Gastrocnemius medialis (tissue), 4 donors: ENCODE measurements at regions of chr19 and their contacts with region 1.

Region 1: DNA sequence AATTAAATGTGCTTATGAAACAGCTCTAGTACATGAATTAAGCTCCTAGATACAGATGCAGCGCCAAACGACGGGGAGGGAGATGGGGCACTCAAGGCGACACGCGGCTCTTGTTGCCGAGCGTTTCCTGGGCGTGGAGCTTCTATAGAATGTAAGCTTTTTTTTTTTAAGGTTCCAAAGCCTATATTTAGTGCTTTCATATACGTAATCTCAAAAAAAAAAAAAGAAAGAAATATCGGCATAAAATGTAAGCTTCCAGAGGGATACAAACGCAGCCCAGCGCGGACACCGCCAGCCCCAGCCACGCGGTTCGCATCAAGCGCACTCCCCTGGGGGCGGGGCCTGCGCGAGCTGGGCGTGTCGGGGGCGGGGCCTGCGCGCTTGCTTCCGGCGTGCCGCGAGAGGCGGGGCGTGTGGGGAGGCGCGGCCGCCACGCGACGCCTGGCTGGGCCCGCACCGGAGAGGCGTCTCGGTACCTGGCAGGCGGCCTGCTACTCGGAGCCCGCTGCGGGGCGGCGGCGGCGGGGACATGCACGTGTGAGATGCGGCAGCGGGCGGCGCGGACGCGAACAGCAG is at the start of gene URI1:
- DNase-seq: peak; percentile 80 to 87
- ATAC-seq: peak; percentile 93 to 94
- H3K4me3 ChIP-seq: peak within 1 kb of the TSS; percentile 65 to 88 (median 78)
- H3K27ac ChIP-seq: peak within 1 kb of the TSS; percentile 70 to 87 (median 80)
- H3K4me1 ChIP-seq: peaks cover 24 to 25% of the 10 kb centered on the region in 2 donors
- H3K27me3 ChIP-seq: no peaks in the 10 kb centered on the region
- CTCF ChIP-seq: no peak
- POLR2A ChIP-seq: peak; percentile 74 to 84
- total RNA-seq, gene URI1: 37.4 to 84.1 (median 59.2) TPM

Region 2: GRCh38 chr19:29844891-29845572 is 96.9 kb before region 1 on chr19:
- in situ Hi-C with region 1: no loop called
- intact Hi-C with region 1: loop called (anchors 1 kb)
- DNase-seq: peak; percentile 86 to 90
- ATAC-seq: peak; percentile 86 to 89
- H3K4me3 ChIP-seq: peak overlapping the region; percentile 67 to 88 (median 74)
- H3K27ac ChIP-seq: peak overlapping the region; percentile 76 to 92 (median 90)
- H3K4me1 ChIP-seq: peaks cover 12 to 15% of the 10 kb centered on the region in 2 donors
- H3K27me3 ChIP-seq: peaks cover 0 to 8% (median 7%) of the 10 kb centered on the region in 3 donors
- CTCF ChIP-seq: peak in 1 of 5 experiments; percentile 9
- POLR2A ChIP-seq: peak; percentile 9 to 50

Region 3: GRCh38 chr19:29956855-29957254 is 14.9 kb after region 1 on chr19:
- in situ Hi-C with region 1: no loop called
- intact Hi-C with region 1: no loop called
- DNase-seq: no peak
- ATAC-seq: no peak
- H3K4me3 ChIP-seq: no peak overlapping the region
- H3K27ac ChIP-seq: no peak overlapping the region
- H3K4me1 ChIP-seq: peaks cover 0 to 3% of the 10 kb centered on the region in 2 donors
- H3K27me3 ChIP-seq: no peaks in the 10 kb centered on the region
- CTCF ChIP-seq: no peak
- POLR2A ChIP-seq: no peak

Region 4: DNA sequence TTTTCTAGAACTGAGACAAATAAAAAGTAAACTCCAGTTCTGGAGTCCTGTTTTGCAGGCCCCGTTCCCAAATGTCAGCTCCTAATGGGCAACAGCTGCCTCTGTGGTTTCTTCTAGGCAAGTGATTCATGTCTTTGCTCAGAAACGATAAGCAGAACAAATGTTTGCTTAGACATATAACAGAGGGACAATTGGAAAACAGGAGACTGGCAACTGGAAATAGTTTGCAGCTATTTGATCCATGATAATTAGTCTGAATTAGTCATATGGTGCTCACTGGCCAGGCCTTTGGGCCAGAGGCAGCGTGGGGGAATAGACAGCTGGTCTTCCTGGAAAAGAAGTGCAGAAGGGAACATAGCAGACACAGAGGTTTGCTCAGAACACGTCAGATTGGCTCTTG is 1436.5 kb after region 1 on chr19:
- in situ Hi-C with region 1: no loop called
- intact Hi-C with region 1: no loop called
- DNase-seq: no peak
- ATAC-seq: peak in 1 of 2 donors; percentile 52
- H3K4me3 ChIP-seq: no peak overlapping the region
- H3K27ac ChIP-seq: no peak overlapping the region
- H3K4me1 ChIP-seq: no peaks in the 10 kb centered on the region
- H3K27me3 ChIP-seq: no peaks in the 10 kb centered on the region
- CTCF ChIP-seq: no peak
- POLR2A ChIP-seq: no peak